ENCODE measurements at regions of chr11 and their contacts with region 1.

Region 1: DNA sequence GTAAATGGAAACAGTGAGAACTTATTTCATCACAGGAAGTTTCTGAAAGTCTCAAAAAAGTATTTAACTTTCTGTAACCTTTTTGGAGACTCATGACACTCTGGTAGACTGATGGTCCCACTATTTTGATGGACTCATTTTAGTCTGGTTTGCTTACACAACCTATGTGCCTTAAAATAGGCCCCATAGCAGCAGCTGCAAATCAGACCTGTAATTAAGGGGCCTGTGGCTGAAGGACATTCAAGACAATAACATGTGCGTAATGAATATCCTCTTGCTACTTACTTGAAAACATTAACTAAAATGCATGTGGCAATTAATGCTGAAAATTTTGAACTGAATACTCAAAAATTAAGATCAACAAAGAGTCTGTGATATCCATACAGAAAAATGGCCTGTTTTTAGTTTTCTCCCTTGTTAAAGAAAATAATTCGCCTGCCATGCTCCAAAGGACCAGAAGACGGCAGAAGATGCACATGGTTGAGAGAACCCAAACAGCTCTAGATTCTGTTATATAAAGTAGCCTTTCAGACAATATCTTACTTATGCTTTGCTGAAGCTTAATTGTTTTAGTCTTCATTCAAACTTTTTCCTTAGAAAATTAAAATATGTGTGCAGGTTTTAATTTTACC is 568.5 kb downstream of the KCNA4 start:
- DNase-seq: no peak
- ATAC-seq: peak in 1 of 8 donors; percentile 58
- H3K4me3 ChIP-seq: no peak overlapping the region
- H3K27ac ChIP-seq: no peak overlapping the region
- H3K4me1 ChIP-seq: peaks cover 0 to 4% (median 0%) of the 10 kb centered on the region in 9 donors
- H3K27me3 ChIP-seq: no peaks in the 10 kb centered on the region
- CTCF ChIP-seq: peak in 8 of 9 donors; percentile 17 to 64 (median 54)

Region 2: DNA sequence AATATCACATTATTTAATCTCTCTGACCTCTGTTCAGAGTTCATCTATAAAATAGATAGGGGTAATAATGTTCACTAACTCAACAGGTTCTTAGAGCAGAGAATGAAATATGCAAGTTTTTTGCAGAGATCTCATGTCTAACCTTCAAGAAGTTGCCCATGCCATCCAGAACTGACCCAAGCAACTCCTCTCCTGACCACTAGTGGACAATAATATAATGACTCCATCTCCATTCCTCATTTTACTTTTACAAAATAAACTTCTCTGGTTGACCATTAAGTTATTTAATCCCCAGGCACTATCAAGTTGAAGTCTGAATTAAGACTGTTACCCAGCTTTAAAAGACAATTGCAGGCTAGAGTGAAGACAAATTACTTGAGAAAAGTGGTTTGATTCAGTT is 185.9 kb after region 1 on chr11:
- intact Hi-C with region 1: loop called in 3 of 10 experiments (anchors 10 kb)
- DNase-seq: no peak
- ATAC-seq: no peak
- H3K4me3 ChIP-seq: no peak overlapping the region
- H3K27ac ChIP-seq: no peak overlapping the region
- H3K4me1 ChIP-seq: no peaks in the 10 kb centered on the region
- H3K27me3 ChIP-seq: no peaks in the 10 kb centered on the region
- CTCF ChIP-seq: peak in 6 of 9 donors; percentile 23 to 38 (median 34)

Region 3: DNA sequence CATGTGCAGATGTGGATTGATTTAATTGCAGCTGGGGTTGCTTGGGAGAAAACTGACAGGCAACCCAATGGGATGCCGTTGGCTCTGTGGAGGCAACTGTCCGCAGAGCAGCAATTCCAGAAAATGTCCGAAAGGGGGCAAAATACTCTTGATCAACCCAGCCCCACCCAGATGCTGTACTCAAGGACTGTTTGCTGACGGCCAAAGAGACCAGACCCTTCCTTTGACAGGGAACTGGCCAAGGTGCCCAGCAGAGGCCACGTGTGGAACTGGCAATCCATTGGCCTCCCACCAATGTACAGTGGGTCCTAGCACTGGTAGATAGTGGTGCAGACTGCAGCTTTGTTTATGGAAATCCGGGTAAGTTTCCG is 598.2 kb after region 1 on chr11:
- intact Hi-C with region 1: loop called in 1 of 10 experiments (anchors 10 kb)
- DNase-seq: no peak
- ATAC-seq: no peak
- H3K4me3 ChIP-seq: no peak overlapping the region
- H3K27ac ChIP-seq: no peak overlapping the region
- H3K4me1 ChIP-seq: no peaks in the 10 kb centered on the region
- H3K27me3 ChIP-seq: no peaks in the 10 kb centered on the region
- CTCF ChIP-seq: no peak

Region 4: GRCh38 chr11:30143098-30143705 is 694.8 kb after region 1 on chr11:
- intact Hi-C with region 1: loop called in 2 of 10 experiments (anchors 5 to 10 kb)
- DNase-seq: no peak
- ATAC-seq: peak in 1 of 8 donors; percentile 27
- H3K4me3 ChIP-seq: no peak overlapping the region
- H3K27ac ChIP-seq: no peak overlapping the region
- H3K4me1 ChIP-seq: no peaks in the 10 kb centered on the region
- H3K27me3 ChIP-seq: no peaks in the 10 kb centered on the region
- CTCF ChIP-seq: peak; percentile 56 to 79 (median 73)

Region 5: DNA sequence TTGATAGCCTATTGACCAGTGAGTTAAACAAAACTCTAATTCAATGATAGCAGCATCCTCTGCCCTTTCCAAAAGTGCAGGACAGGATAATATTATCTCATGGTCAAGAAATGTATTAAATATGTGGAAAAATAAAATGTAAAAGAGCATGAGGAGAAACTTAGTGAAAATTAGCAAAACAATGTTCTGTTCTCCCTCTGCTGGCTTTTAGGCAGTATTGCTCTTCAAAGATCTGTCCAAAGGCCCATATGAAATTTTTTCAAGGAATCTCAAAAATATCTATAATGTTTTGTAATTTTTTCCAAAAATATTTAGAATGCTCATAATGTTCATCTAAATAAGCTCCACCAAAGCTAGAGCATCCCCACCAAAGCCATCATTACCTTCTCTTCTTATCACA is 866.3 kb after region 1 on chr11:
- intact Hi-C with region 1: loop called in 1 of 10 experiments (anchors 5 kb)
- DNase-seq: no peak
- ATAC-seq: no peak
- H3K4me3 ChIP-seq: no peak overlapping the region
- H3K27ac ChIP-seq: no peak overlapping the region
- H3K4me1 ChIP-seq: no peaks in the 10 kb centered on the region
- H3K27me3 ChIP-seq: peaks cover 0 to 11% (median 0%) of the 10 kb centered on the region in 7 donors
- CTCF ChIP-seq: peak in 8 of 9 donors; percentile 14 to 56 (median 41)

Measured in heart right ventricle (tissue), 16 donors.